ENCODE measurements at regions of chr6 and their contacts with region 1.

Region 1: DNA sequence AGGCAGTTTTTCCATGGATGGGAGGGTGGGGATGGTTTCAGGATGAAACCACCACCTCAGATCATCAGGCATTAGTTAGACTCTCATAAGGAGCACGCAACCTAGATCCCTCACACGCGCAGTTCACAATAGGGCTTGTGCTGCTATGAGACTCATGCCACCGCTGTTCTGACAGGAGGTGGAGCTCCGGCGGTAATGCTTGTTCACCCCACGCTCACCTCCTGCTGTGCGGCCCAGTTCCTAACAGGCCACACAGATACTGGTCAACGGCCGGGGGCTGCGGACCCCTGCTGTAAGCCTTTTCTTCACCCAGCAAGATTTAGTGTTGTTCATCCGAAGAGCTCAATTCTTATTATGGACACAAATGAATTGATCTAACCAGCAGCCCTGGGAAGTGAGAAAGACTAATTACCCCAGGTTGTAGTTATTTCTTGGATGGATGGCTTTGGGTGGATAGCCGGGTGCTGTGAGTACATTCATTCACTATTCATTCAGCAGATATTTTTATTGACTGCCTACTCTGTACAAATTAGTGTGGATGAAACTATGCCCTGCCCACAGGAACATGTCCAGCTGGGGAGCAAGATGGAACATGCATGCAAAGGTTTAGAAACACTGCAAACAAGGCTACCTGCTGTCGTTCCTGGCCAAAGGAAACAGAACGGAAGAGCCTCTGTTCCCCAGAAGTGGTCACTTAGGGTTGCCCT is 57.2 kb downstream of the RIOK1 start:
- DNase-seq: no peak
- H3K4me3 Mint-ChIP-seq: no peak overlapping the region
- H3K27ac Mint-ChIP-seq: no peak overlapping the region
- H3K4me1 Mint-ChIP-seq: no peaks in the 10 kb centered on the region
- H3K27me3 Mint-ChIP-seq: no peaks in the 10 kb centered on the region

Region 2: DNA sequence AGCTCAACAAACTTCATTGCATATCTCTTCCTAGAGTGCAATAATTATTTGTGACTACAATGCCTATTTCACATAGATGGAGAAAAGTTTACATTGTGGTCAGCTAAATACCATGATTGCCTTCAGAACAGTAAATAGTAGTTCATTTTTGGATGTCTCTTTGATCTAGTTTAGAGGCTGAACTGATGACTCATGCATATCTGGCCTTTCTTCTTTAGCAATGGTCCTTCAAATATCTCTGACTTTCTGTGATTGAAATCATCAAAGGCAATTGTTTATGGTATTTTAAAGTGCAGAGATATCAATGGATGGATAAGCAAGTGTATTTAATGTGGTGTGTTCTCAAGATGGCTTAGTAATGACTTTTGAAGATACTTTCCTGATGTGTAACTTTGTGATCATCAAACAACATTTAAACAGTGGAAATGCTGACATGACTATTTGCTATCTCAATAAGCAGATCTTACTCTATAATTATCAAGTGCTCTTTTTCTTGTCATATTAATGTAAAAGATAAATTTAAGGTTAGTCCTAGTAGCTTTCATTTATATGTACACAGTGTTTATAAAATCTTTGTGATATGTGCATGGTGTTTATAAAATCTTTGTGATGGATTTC is 1512.2 kb after region 1 on chr6:
- CTCF ChIA-PET with region 1: no interaction called
- intact Hi-C with region 1: loop called (anchors 10 kb)
- DNase-seq: no peak
- H3K4me3 Mint-ChIP-seq: no peak overlapping the region
- H3K27ac Mint-ChIP-seq: no peak overlapping the region
- H3K4me1 Mint-ChIP-seq: no peaks in the 10 kb centered on the region
- H3K27me3 Mint-ChIP-seq: peaks cover 2% of the 10 kb centered on the region

Measured in activated naive CD4-positive, alpha-beta T cell treated with anti-CD3 and anti-CD28 coated beads for 36 hours (primary cell).